ENCODE measurements at regions of chr11 and their contacts with region 1.

Region 1: DNA sequence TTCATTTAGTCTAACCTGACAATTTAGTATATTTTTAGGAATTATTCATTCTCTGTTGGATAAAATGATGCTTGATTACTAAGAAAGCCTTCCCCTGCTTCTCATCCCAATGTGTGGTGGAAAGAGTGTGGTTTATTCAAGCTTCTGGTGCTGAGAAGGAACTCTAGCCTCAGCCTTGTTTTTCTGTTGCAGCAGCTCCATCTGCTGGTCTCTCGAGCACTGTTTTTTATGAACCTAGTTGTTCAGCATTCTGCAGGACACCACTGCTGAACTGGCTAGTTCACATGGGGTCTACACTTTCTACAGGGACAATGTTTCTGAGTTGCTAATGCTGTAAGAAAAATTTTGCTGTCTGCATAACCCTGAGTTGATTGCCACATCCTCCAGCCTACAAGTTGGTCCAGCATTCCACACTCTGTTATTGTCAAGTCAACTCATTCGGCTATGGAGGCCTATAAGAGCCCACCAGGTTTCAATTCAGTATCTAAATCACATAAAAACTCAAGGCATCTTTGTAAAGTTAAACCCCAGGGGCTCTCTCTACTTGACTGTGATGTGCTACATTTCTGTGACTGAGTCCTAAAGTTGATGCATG is 14.3 kb downstream of the OR2AG2 start:
- DNase-seq: peak; percentile 19 to 81 (median 51)
- ATAC-seq: peak; percentile 73 to 84 (median 80)
- H3K4me3 ChIP-seq: no peak overlapping the region
- H3K4me3 Mint-ChIP-seq: no peak overlapping the region
- H3K27ac ChIP-seq: no peak overlapping the region
- H3K27ac Mint-ChIP-seq: no peak overlapping the region
- H3K4me1 ChIP-seq: no peaks in the 10 kb centered on the region
- H3K4me1 Mint-ChIP-seq: peaks cover 13 to 17% (median 14%) of the 10 kb centered on the region in 3 donors
- H3K27me3 ChIP-seq: no peaks in the 10 kb centered on the region
- H3K27me3 Mint-ChIP-seq: peaks cover 3 to 7% of the 10 kb centered on the region in 2 donors

Region 2: DNA sequence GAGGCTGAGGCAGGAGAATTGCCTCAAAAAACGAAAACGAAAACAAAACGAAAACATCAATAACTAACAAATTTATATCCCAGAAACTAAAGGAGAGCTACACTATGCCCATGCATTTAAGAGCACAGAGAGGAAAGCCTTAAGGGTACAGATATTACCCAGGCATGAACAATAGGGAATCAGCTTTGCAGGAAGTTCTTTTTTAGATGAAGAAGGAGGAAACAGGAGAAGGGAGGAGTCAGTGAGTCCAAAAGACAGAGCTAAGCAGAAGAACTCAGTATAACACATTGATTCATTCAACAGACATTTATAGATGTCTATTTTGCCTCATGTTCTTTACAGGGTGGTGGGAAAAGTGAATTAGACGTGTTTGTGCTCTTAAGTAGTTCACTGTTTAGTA is 82.6 kb before region 1 on chr11:
- CTCF ChIA-PET with region 1: no interaction called
- POLR2A ChIA-PET with region 1: no interaction called
- DNase-seq: no peak
- ATAC-seq: no peak
- H3K4me3 ChIP-seq: no peak overlapping the region
- H3K4me3 Mint-ChIP-seq: peak overlapping the region in 1 of 3 donors; percentile 34
- H3K27ac ChIP-seq: no peak overlapping the region
- H3K27ac Mint-ChIP-seq: peak overlapping the region in 1 of 2 donors; percentile 16
- H3K4me1 ChIP-seq: peaks cover 23 to 45% of the 10 kb centered on the region in 2 experiments
- H3K4me1 Mint-ChIP-seq: peaks cover 52 to 75% (median 59%) of the 10 kb centered on the region in 3 donors
- H3K27me3 ChIP-seq: no peaks in the 10 kb centered on the region
- H3K27me3 Mint-ChIP-seq: no peaks in the 10 kb centered on the region

Region 3: DNA sequence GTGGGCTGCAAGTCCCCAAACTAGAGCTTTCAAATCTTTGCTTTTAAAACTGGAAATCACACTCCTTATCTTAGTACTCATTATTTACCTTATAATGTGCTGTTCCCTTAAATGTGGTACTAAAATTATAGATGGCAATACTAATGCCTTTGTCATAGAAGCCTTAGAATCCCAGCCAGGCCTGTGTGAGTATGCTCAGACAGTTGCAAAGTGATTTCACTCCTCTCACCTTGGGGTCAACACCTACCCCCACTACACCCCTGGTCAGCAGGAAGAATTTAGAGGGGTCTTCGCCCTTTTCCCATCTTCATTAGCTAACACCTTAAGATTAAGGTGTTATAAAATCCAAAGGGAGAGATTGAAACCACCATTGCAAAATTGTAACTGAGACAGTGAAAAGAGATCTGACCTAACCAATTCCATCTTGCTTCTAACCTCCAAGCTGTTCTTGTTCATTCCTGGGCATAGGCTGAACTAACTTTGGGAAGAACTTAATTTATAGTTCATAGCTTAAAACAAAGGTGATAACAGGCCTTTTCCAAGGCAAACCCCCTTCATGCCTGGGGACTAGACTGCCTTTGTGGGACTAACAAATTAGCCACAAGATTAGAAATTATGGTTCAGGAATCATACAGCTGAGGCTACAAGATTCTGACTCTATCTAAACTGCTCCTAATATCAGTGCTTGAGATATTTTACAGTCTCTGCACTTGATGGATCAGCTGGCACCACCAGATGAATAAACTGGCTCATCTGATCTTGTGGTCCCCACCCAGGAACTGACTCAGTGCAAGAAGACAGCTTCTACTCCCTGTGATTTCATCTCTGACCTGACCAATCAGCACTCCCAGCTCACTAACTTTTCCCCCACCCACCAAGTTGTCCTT is 63.9 kb before region 1 on chr11:
- CTCF ChIA-PET with region 1: interaction called, 3 to 5 read pairs
- POLR2A ChIA-PET with region 1: interaction called in 1 of 2 experiments, 11 read pairs
- DNase-seq: peak in 16 of 35 experiments; percentile 6 to 50 (median 30)
- ATAC-seq: peak in 3 of 4 experiments; percentile 55 to 74 (median 60)
- H3K4me3 ChIP-seq: no peak overlapping the region
- H3K4me3 Mint-ChIP-seq: peak overlapping the region in 1 of 3 donors; percentile 2
- H3K27ac ChIP-seq: no peak overlapping the region
- H3K27ac Mint-ChIP-seq: peak overlapping the region; percentile 61 to 71
- H3K4me1 ChIP-seq: peaks cover 0 to 10% of the 10 kb centered on the region in 2 experiments
- H3K4me1 Mint-ChIP-seq: peaks cover 22 to 33% (median 32%) of the 10 kb centered on the region in 3 donors
- H3K27me3 ChIP-seq: no peaks in the 10 kb centered on the region
- H3K27me3 Mint-ChIP-seq: no peaks in the 10 kb centered on the region

Region 4: DNA sequence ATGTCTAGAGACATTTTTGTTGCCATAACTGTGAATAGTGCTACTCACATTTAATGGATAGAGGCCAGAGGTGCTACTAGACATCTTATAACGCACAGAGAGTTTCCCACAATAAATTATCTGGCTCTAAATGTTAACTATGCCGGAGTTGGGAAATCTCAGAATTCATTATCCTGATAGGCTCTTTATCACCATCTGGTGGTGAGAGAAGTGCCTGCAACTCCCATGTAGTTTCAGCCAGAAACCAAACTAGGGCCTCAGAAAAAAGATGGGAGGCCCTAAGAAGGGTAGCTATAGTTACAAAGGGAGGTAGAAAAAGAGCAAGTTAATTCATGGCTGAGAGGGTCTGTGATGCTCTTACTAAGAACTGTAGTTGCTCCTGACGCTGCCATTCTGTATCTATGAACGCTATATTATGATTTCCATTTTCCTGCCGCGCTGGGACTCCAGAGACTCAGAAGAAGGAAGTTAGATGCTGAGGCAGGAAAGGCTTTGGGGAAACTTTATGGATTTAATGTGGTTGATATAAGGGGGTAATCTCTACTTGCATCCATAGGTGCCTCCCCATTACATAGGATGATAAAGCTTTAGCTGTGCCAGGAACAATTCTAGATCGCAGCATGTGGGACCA is 51.5 kb before region 1 on chr11:
- CTCF ChIA-PET with region 1: interaction called, 5 to 11 read pairs
- POLR2A ChIA-PET with region 1: no interaction called
- DNase-seq: peak in 22 of 35 experiments; percentile 4 to 72 (median 28)
- ATAC-seq: peak; percentile 53 to 71 (median 62)
- H3K4me3 ChIP-seq: no peak overlapping the region
- H3K4me3 Mint-ChIP-seq: no peak overlapping the region
- H3K27ac ChIP-seq: no peak overlapping the region
- H3K27ac Mint-ChIP-seq: peak overlapping the region; percentile 41 to 72
- H3K4me1 ChIP-seq: peaks cover 0 to 2% of the 10 kb centered on the region in 2 experiments
- H3K4me1 Mint-ChIP-seq: peaks cover 24 to 29% (median 29%) of the 10 kb centered on the region in 3 donors
- H3K27me3 ChIP-seq: no peaks in the 10 kb centered on the region
- H3K27me3 Mint-ChIP-seq: no peaks in the 10 kb centered on the region

Region 5: DNA sequence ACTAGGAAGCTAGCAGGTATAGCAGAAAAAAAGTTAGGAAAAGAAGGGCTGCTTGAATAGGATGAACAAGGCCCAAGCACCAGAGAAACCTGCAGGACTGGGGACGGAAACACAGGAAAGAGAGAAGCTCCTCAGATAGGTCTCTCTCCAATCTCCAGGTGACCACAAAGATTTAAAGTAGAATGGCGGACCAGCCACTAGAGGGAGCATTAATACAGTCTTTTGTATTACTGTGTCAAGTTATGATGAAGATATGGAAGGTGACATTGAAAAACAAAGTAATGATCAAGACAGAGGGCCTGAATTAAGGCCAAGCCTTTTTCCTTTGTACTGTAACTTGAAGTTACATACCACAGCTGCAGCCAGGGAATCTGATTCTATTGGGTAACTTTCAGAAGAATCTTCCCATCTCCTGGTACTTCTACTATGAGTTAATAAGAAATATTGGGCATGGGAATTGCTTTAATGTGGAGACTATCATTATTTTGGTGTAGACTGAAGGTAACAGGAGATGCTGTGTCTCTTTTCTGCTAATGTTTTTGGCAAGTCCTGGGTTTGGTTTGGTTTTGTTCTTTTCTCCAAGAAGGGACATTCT is 19.5 kb before region 1 on chr11:
- CTCF ChIA-PET with region 1: interaction called, 108 to 201 read pairs
- POLR2A ChIA-PET with region 1: interaction called in 1 of 2 experiments, 3 read pairs
- DNase-seq: peak; percentile 22 to 88 (median 60)
- ATAC-seq: peak; percentile 42 to 64 (median 58)
- H3K4me3 ChIP-seq: no peak overlapping the region
- H3K4me3 Mint-ChIP-seq: peak overlapping the region; percentile 4 to 50 (median 32)
- H3K27ac ChIP-seq: peak overlapping the region; percentile 45
- H3K27ac Mint-ChIP-seq: peak overlapping the region; percentile 93 to 94
- H3K4me1 ChIP-seq: peaks cover 52 to 73% of the 10 kb centered on the region in 2 experiments
- H3K4me1 Mint-ChIP-seq: peaks cover 77 to 92% (median 89%) of the 10 kb centered on the region in 3 donors
- H3K27me3 ChIP-seq: no peaks in the 10 kb centered on the region
- H3K27me3 Mint-ChIP-seq: no peaks in the 10 kb centered on the region

Region 6: DNA sequence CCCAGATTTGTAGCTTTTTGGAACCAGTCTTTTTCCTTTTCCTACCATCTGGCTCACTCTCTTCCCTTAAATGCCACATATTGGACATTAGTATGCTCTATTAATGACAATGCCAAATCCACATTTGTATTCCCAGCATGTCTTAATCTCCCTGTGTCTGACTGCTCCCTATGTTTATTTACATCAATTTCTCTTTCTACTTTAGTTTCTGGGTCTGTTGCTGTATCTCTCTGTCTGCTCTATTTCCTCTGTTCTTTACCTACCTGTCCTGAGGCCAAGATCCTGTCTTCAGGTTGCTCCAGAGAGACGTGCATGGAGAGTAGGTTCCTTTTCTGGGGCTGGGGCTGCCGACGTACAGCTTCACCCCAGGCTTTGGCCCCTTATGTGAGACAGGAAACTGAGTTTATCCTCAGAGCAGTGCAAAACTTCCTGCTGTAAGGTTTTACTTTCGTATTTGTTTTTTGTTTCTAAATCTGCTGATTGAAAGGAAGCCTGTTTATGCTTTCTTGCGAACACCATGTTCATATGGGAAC is 11.3 kb before region 1 on chr11:
- CTCF ChIA-PET with region 1: interaction called, 108 to 201 read pairs
- POLR2A ChIA-PET with region 1: interaction called in 1 of 2 experiments, 3 read pairs
- DNase-seq: peak; percentile 10 to 75 (median 41)
- ATAC-seq: peak; percentile 79 to 89 (median 84)
- H3K4me3 ChIP-seq: peak overlapping the region; percentile 65 to 67
- H3K4me3 Mint-ChIP-seq: no peak overlapping the region
- H3K27ac ChIP-seq: peak overlapping the region; percentile 90
- H3K27ac Mint-ChIP-seq: no peak overlapping the region
- H3K4me1 ChIP-seq: peaks cover 11 to 51% of the 10 kb centered on the region in 2 experiments
- H3K4me1 Mint-ChIP-seq: peaks cover 6 to 24% (median 19%) of the 10 kb centered on the region in 3 donors
- H3K27me3 ChIP-seq: no peaks in the 10 kb centered on the region
- H3K27me3 Mint-ChIP-seq: no peaks in the 10 kb centered on the region

Measured in T-cell (primary cell).